ENCODE measurements at regions of chr7 and their contacts with region 1.

Region 1: GRCh38 chr7:127253281-127254162 is 781 bp upstream of the GRM8 start:
- DNase-seq: peak; percentile 84 to 87 (median 86)
- ATAC-seq: peak; percentile 95
- H3K4me3 ChIP-seq: peak overlapping the region; percentile 53
- H3K27ac ChIP-seq: no peak overlapping the region
- H3K4me1 ChIP-seq: peaks cover 0 to 25% of the 10 kb centered on the region in 2 experiments; a peak in 4 of 5 replicates
- H3K27me3 ChIP-seq: peaks cover 15 to 44% of the 10 kb centered on the region in 2 experiments; a peak in 4 of 5 replicates
- CTCF ChIP-seq: peak; percentile 81 to 93 (median 90)
- EP300 ChIP-seq: no peak
- POLR2A ChIP-seq: no peak
- RAD21 ChIP-seq: peak; percentile 72 to 76

Region 2: DNA sequence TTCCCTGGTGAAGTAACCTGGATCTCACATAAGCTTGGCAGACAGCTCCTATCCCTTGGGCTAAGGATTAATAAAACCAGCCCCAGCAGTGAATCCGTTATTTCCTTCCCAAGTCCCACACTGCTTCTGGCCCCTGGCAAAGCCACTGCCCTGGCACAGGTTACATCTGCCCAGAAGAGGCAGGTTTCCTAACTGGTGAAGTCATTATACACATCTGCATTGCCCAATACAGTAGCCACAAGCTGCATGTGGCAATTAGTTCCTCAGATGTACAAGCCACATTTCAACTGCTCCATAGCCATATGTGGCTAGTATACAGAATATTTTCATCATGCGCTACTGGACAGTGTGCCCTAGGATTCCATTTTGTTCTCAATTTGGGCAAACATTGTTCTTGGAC is 273.8 kb before region 1 on chr7:
- CTCF ChIA-PET with region 1: no interaction called
- POLR2A ChIA-PET with region 1: no interaction called
- in situ Hi-C with region 1: no loop called
- intact Hi-C with region 1: no loop called
- DNase-seq: no peak
- ATAC-seq: no peak
- H3K4me3 ChIP-seq: no peak overlapping the region
- H3K27ac ChIP-seq: no peak overlapping the region
- H3K4me1 ChIP-seq: no peaks in the 10 kb centered on the region
- H3K27me3 ChIP-seq: no peaks in the 10 kb centered on the region
- CTCF ChIP-seq: no peak
- EP300 ChIP-seq: no peak
- POLR2A ChIP-seq: no peak
- RAD21 ChIP-seq: no peak

Region 3: GRCh38 chr7:127107601-127108007 is 145.9 kb before region 1 on chr7:
- CTCF ChIA-PET with region 1: no interaction called
- POLR2A ChIA-PET with region 1: no interaction called
- in situ Hi-C with region 1: no loop called
- intact Hi-C with region 1: loop called (anchors 1 kb)
- DNase-seq: peak; percentile 59 to 81 (median 66)
- ATAC-seq: peak; percentile 93
- H3K4me3 ChIP-seq: no peak overlapping the region
- H3K27ac ChIP-seq: no peak overlapping the region
- H3K4me1 ChIP-seq: no peaks in the 10 kb centered on the region
- H3K27me3 ChIP-seq: no peaks in the 10 kb centered on the region
- CTCF ChIP-seq: peak; percentile 28 to 82 (median 49); a peak in 5 of 6 replicates
- EP300 ChIP-seq: no peak
- POLR2A ChIP-seq: no peak
- RAD21 ChIP-seq: peak; percentile 60 to 61

Region 4: GRCh38 chr7:127322351-127322750 is 68.8 kb after region 1 on chr7:
- CTCF ChIA-PET with region 1: no interaction called
- POLR2A ChIA-PET with region 1: no interaction called
- in situ Hi-C with region 1: no loop called
- intact Hi-C with region 1: no loop called
- DNase-seq: no peak
- ATAC-seq: no peak; the same call in 2 of the 3 replicates
- H3K4me3 ChIP-seq: no peak overlapping the region
- H3K27ac ChIP-seq: no peak overlapping the region
- H3K4me1 ChIP-seq: no peaks in the 10 kb centered on the region
- H3K27me3 ChIP-seq: peaks cover 2 to 23% of the 10 kb centered on the region in 2 experiments; a peak in 3 of 5 replicates
- CTCF ChIP-seq: no peak
- EP300 ChIP-seq: no peak
- POLR2A ChIP-seq: no peak
- RAD21 ChIP-seq: no peak

Region 5: GRCh38 chr7:127404286-127405072 is 151.0 kb after region 1 on chr7:
- CTCF ChIA-PET with region 1: no interaction called
- POLR2A ChIA-PET with region 1: no interaction called
- in situ Hi-C with region 1: no loop called
- intact Hi-C with region 1: loop called (anchors 5 kb)
- DNase-seq: no peak
- ATAC-seq: no peak
- H3K4me3 ChIP-seq: no peak overlapping the region
- H3K27ac ChIP-seq: no peak overlapping the region
- H3K4me1 ChIP-seq: no peaks in the 10 kb centered on the region
- H3K27me3 ChIP-seq: peaks cover 3 to 7% of the 10 kb centered on the region in 2 experiments; a peak in 2 of 5 replicates
- CTCF ChIP-seq: no peak
- EP300 ChIP-seq: no peak
- POLR2A ChIP-seq: no peak
- RAD21 ChIP-seq: no peak

Region 6: DNA sequence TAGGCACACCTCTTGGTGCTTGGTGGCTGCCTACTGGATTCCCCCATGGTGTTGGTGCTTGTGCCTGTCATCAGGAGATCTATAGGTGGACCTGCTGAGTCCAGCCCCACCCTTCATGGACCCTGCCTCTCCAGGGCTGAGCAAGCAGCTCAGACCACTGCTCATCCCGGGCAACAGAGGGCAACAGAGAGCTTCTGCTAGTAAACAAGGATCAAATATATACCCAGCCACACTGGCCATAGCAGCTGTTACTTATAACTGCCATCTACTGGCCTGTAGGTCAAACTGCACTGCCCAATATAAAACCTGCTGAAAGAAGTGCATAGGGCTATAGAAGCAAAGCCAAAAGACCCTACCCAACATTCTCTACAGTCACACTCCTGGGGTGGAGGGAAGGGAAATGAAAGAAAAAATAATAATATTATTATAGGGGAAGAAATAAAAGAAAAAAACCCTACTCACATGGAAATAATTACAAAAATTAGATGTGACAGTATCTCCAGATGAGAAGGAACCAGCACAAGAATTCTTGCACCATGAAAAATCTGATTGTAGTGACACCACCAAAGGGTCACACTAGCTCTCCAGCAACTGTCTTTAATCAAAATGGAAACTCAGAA is 193.9 kb after region 1 on chr7:
- CTCF ChIA-PET with region 1: interaction called, 3 read pairs
- POLR2A ChIA-PET with region 1: no interaction called
- in situ Hi-C with region 1: no loop called
- intact Hi-C with region 1: loop called (anchors 1 kb)
- DNase-seq: peak; percentile 74 to 85 (median 75)
- ATAC-seq: peak; percentile 100
- H3K4me3 ChIP-seq: no peak overlapping the region
- H3K27ac ChIP-seq: no peak overlapping the region
- H3K4me1 ChIP-seq: no peaks in the 10 kb centered on the region
- H3K27me3 ChIP-seq: peaks cover 4 to 9% of the 10 kb centered on the region in 2 experiments; a peak in 3 of 5 replicates
- CTCF ChIP-seq: peak; percentile 96 to 99 (median 99)
- EP300 ChIP-seq: no peak
- POLR2A ChIP-seq: no peak
- RAD21 ChIP-seq: peak; percentile 78 to 94